ENCODE measurements at regions of chr4 and their contacts with region 1.

Region 1: DNA sequence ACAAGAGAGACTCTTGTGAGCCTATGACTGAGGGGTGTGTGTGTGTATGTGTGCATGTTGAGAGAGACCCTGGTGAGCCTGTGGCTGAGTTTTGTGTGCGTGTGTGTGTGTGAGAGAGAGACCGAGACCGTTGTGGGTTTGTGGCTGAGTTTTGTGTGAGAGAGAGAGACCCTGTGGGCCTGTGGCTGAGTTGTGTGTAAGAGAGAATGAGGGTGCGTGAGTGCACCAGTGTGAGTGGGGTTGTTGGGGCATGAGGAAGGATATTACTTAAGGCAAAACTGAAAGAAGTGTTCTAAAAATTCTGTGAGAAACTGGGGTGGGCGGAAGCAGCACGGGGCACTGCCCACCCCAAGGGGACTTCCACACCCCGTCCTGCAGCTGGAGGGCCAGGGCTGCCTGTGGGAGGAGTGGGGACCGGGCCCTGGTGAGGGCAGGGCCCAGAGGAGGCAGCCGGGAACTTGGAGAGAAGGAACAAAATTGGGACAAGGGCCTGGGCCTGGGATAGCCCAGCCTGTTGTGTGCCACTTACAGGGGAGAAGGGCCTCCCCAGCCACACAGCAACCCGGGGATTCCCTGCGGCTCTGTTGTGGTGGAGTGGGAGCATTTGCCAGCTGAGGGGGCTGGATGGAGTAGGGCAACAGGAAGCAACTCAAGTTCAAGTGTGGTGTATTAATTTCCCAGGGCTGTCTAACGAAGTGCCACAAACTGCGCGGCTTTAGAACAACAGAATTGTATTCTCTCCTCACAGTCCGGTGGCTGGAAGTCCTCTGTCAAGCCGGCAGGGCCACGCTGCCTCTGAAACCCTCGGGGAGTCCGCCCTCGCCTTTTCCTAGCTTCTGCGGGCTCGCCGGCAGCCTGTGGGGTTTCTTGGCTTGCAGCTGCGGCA is 22.1 kb downstream of the TMEM131L start:
- DNase-seq: peak; percentile 71
- CTCF ChIP-seq: no peak

Region 2: GRCh38 chr4:153393397-153393796 is 94.9 kb before region 1 on chr4:
- CTCF ChIA-PET with region 1: no interaction called
- POLR2A ChIA-PET with region 1: no interaction called
- DNase-seq: no peak
- CTCF ChIP-seq: no peak

Region 3: DNA sequence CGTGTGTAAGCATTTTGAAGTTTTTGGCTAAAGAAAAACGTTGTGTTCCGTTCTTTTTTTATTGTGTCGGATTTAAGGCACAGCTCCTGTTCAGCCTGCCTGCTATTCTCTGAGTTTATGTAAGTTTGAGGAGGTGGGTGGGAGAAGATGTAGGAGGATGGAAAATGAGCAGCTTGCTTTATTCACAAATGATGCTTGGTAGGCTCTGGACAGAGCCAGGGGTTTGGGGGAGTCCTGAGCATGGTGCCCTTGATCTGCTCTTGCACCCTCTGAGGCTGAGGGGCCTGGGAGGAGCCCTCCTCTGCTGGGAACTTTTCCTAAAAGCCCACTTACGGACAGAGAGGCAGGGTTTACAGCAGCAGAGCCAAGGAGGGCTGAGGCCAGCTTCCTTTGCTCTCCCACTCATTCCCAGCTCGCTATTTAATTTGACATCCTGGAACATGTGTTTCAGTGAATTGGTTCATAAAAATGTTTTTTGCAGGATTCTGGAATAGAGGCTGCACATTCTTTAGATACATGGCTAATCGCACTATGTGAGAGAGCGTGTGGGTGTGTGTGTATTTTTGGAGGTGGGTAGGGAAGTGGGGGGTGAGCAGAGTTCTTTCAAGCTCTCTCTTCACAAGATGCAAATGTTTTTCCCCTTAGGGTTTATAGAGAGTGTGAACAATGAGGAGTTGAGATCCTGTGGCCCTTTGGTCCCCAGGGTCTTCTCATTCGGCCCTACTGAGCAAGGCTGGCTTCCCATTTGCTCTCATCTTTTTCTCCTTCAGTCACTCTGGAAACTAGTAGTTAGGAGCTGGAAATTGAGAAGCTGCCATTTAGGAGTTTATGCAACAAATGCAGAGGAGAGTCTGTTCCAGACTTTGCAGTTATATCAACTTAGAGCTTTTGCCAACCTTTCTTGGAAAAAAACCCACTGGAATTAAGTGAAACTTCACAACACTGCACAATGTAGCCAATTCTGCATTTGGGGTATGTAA is 10.0 kb after region 1 on chr4:
- CTCF ChIA-PET with region 1: interaction called, 10 read pairs
- POLR2A ChIA-PET with region 1: interaction called, 11 read pairs
- DNase-seq: peak; percentile 62
- CTCF ChIP-seq: no peak